CD4-positive, alpha-beta memory T cell (primary cell): ENCODE measurements at regions of chr2 and their contacts with region 1.

Region 1: DNA sequence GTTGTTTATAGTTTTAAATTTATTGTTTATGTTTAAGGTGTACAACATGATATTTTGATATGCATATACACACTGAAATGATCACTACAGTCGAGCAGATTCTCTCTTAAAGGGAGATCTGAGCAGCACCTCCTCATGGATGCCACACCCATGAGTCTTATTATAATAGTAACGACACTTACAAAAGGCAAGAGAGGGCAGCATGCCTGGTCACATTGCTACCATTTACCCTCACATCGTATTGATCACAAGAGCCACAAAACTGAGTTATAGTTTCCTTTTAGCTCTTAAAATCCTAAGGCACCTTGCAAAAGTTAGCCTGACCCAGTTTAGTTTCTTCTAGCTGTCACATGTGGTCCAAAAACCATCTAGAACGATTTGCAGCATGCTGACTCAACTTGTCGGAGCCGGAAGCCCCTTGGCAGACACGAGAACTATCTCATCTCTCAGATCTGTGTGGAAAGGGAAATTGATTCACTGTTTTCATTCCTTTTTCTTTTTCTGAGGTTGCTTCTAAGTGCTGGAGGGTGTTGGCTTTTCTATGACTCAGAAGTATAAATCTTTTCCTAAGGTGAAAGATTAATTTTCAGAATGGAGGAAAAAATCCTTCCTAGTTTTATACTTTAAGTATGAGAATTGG is 85.3 kb downstream of the CDC42EP3 start:
- DNase-seq: peak; percentile 80 to 93 (median 86)
- H3K4me3 ChIP-seq: peak overlapping the region in 1 of 2 donors; percentile 7
- H3K4me3 Mint-ChIP-seq: peak overlapping the region; percentile 55 to 96 (median 80)
- H3K27ac ChIP-seq: peak overlapping the region; percentile 76
- H3K27ac Mint-ChIP-seq: peak overlapping the region; percentile 87 to 98 (median 94)
- H3K4me1 ChIP-seq: peaks cover 95% of the 10 kb centered on the region
- H3K4me1 Mint-ChIP-seq: peaks cover 77 to 95% (median 88%) of the 10 kb centered on the region in 4 donors
- H3K27me3 ChIP-seq: no peaks in the 10 kb centered on the region
- H3K27me3 Mint-ChIP-seq: no peaks in the 10 kb centered on the region

Region 2: DNA sequence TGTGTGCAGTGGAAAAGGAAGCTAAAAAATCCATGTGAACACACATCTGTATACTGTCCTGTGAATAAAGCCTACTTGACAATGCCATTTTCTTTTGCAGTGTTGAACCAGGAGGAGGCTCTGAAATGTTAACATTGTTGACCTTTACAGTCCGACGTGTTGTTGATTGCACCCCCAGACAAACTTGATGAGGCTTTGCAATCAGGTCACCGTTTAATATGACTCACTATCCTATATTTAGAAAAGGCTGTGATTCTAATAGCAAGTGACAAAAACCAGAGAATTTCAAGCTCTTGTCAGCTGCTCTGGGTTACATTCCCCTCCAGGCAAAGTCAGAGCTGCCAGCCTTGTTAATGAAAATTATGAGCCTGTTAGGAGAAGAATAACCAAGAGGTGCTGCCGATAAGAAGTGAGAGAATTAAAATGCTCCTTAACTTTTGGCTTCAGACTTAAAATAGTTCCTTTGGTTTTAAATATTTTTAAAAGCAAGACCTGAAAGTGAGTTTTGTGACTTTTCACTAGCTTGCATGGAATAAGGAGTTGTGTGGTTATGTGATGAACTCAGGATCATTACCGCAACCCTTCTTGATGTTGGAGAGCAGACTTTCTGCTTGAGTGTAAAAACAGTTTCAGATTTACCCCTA is 79.6 kb before region 1 on chr2:
- CTCF ChIA-PET with region 1: no interaction called
- POLR2A ChIA-PET with region 1: no interaction called
- intact Hi-C with region 1: no loop called
- DNase-seq: no peak
- H3K4me3 ChIP-seq: no peak overlapping the region
- H3K4me3 Mint-ChIP-seq: no peak overlapping the region
- H3K27ac ChIP-seq: no peak overlapping the region
- H3K27ac Mint-ChIP-seq: no peak overlapping the region
- H3K4me1 ChIP-seq: no peaks in the 10 kb centered on the region
- H3K4me1 Mint-ChIP-seq: peaks cover 0 to 1% (median 0%) of the 10 kb centered on the region in 4 donors
- H3K27me3 ChIP-seq: no peaks in the 10 kb centered on the region
- H3K27me3 Mint-ChIP-seq: peaks cover 4 to 6% of the 10 kb centered on the region in 2 donors

Region 3: GRCh38 chr2:37549598-37549997 is 36.5 kb before region 1 on chr2:
- CTCF ChIA-PET with region 1: interaction called, 9 read pairs
- POLR2A ChIA-PET with region 1: interaction called, 15 read pairs
- intact Hi-C with region 1: loop called (anchors 5 kb)
- DNase-seq: no peak
- H3K4me3 ChIP-seq: no peak overlapping the region
- H3K4me3 Mint-ChIP-seq: no peak overlapping the region
- H3K27ac ChIP-seq: no peak overlapping the region
- H3K27ac Mint-ChIP-seq: no peak overlapping the region
- H3K4me1 ChIP-seq: peaks cover 12% of the 10 kb centered on the region
- H3K4me1 Mint-ChIP-seq: peaks cover 13 to 26% (median 16%) of the 10 kb centered on the region in 4 donors
- H3K27me3 ChIP-seq: no peaks in the 10 kb centered on the region
- H3K27me3 Mint-ChIP-seq: no peaks in the 10 kb centered on the region

Region 4: DNA sequence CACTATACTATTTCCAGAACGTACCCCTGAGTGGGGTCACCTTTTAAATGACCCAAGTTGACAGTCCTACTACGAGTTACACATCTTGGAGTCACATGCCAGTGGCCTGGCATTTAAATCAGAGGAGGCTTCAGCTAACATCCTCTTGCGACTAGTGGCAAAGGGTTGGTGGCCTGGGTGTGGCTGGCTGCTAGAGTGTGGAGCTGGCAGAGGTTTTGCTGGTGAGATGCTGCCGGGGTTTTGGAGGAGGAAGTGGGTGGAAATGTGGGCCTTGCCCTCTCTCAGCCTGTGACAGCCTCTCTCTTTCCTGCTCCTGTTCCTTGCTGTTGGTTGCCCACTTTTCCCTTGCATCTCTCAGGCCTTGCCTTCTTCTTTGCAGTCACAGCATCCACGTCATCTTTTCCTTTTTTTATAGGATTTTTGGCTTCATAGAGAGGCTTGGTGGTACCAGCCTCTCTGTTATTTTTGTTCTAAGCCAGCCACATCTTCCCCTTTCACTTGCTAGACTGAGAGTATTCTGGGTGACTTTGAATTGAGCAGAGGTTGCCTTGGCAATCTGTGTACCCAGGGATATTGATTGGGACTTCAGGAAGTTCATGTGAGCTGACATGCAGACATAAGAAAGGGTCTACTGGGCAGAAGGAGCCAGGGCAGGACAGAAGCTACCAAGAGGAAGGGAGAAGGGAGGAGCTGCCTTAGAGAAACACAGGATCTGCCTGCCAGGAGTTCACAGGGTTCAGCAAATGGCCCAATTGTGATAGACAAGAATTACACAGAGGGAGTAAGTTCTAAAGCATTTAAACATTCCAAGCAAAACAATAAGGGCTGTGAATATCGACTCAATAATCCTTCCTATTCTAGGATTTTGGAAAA is 29.9 kb after region 1 on chr2:
- CTCF ChIA-PET with region 1: interaction called, 4 read pairs
- POLR2A ChIA-PET with region 1: interaction called, 45 read pairs
- intact Hi-C with region 1: loop called (anchors 1 kb)
- DNase-seq: peak; percentile 73 to 81 (median 77)
- H3K4me3 ChIP-seq: no peak overlapping the region
- H3K4me3 Mint-ChIP-seq: peak overlapping the region in 7 of 8 donors; percentile 26 to 76 (median 74)
- H3K27ac ChIP-seq: peak overlapping the region; percentile 37
- H3K27ac Mint-ChIP-seq: peak overlapping the region; percentile 90 to 97 (median 96)
- H3K4me1 ChIP-seq: peaks cover 72% of the 10 kb centered on the region
- H3K4me1 Mint-ChIP-seq: peaks cover 53 to 80% (median 70%) of the 10 kb centered on the region in 4 donors
- H3K27me3 ChIP-seq: no peaks in the 10 kb centered on the region
- H3K27me3 Mint-ChIP-seq: no peaks in the 10 kb centered on the region

Region 5: GRCh38 chr2:37635504-37636380 is 49.6 kb after region 1 on chr2:
- CTCF ChIA-PET with region 1: no interaction called
- POLR2A ChIA-PET with region 1: interaction called, 32 read pairs
- intact Hi-C with region 1: loop called (anchors 1 kb)
- DNase-seq: peak; percentile 70 to 94 (median 78)
- H3K4me3 ChIP-seq: peak overlapping the region in 1 of 2 donors; percentile 22
- H3K4me3 Mint-ChIP-seq: peak overlapping the region in 7 of 8 donors; percentile 54 to 80 (median 66)
- H3K27ac ChIP-seq: peak overlapping the region; percentile 72
- H3K27ac Mint-ChIP-seq: peak overlapping the region; percentile 92 to 98 (median 94)
- H3K4me1 ChIP-seq: peaks cover 76% of the 10 kb centered on the region
- H3K4me1 Mint-ChIP-seq: peaks cover 68 to 90% (median 75%) of the 10 kb centered on the region in 4 donors
- H3K27me3 ChIP-seq: no peaks in the 10 kb centered on the region
- H3K27me3 Mint-ChIP-seq: no peaks in the 10 kb centered on the region

Region 6: DNA sequence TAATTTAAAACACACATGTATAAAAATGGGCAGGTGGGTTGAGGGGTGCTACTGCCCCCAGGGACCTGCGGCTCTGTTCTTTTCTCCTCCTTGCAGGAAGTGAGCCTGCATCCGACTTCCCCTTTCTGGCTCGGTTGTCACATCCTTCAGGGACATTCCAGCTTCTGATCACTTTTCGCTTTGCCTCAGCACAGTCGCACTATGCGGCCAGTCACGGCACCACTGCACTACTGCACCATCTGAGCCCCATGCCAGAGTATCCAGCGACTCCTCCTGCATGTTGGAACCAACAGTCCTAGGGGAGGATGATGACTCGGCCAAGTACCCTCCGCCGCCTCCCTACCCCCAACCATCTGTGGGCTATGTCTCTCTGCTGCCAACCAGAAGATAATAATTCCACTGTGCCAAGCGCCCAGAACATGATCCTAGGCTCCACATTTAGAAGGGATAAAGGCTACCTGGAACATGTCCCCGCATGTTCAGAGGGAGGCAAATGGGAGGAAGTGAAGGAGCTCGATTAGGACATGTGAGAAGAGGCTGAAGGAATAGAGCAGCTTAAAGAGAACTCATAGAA is 67.8 kb after region 1 on chr2:
- CTCF ChIA-PET with region 1: interaction called, 21 read pairs
- POLR2A ChIA-PET with region 1: interaction called, 18 read pairs
- intact Hi-C with region 1: no loop called
- DNase-seq: no peak
- H3K4me3 ChIP-seq: no peak overlapping the region
- H3K4me3 Mint-ChIP-seq: peak overlapping the region in 7 of 8 donors; percentile 48 to 76 (median 70)
- H3K27ac ChIP-seq: peak overlapping the region; percentile 63
- H3K27ac Mint-ChIP-seq: peak overlapping the region; percentile 78 to 96 (median 89)
- H3K4me1 ChIP-seq: peaks cover 96% of the 10 kb centered on the region
- H3K4me1 Mint-ChIP-seq: peaks cover 80 to 98% (median 88%) of the 10 kb centered on the region in 4 donors
- H3K27me3 ChIP-seq: no peaks in the 10 kb centered on the region
- H3K27me3 Mint-ChIP-seq: no peaks in the 10 kb centered on the region